ENCODE measurements at regions of chr12 and their contacts with region 1.

Region 1: DNA sequence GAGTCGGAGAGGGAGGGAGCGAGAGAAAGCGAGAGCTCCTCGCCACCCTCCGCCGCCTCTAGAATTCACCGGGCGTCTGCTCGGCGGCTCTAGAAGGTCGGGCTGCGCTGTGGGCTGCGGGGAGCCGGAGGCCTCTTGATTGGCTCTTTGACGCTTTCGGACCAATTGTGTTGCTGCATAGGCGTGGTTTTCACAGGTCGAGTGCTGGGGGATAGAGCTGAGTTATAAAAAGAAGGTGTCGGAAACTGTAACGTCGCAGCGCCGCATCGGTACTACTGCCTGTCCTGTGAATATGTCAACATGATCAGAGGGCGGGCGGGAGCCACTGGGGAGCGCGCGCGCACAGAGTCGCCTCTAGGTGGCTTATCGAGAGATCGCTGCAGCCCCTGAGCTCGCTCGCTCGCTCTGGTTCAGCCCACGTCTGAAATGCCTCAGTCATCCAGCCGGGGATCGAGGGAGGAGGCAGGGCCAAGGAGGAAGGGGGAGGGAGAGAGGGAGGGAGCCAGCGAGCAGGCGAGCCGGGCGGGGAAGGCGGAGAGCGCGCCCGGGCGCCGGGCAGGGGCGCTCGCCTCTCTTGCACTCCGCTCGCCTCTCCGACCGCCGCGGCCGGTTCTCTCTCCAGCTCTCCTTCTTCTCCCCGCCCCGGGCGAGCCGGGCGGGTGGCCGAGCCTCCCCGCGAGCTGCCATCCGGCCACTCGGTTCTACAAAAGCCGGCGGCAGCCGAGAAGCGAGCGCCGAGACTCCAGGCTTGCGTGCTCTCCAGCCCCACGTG is at the start of gene TBX3:
- DNase-seq: peak; percentile 19 to 82 (median 57)

Region 2: DNA sequence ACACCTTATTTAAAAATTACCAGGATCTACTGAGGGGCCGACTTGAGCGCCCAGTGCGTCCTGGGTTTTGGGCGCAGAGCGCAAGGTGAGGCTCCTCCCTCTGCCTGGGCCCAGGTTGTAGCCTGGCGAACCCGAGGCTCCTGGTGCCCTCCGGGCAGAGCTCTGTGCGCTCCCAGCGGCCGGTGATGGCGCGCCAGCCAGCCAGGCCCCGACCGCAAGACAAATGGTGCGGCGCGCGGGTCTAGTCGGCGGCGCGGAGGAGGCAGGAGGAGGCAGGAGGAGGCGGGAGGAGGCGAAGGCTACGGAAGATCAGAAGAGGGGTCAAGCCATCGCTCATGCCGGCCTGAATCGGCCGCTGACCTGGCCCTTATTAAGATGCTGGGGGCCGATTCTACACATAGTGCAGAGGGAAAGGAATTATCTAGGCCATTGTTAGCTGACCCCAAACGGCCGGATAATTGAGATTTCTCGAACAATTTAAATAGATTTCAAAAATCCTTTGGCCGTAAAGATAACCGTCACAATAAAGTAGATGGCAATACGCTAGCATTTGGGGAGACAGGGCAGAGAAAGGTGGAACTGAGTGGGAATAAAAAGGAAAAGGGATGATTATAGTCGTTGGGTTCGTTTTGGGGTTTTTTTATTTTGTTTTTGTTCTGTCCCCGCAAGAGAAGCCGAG is 281.1 kb before region 1 on chr12:
- intact Hi-C with region 1: loop called (anchors 10 kb)
- DNase-seq: peak in 2 of 42 donors; percentile 12 to 25

Region 3: GRCh38 chr12:114611145-114612018 is 72.9 kb before region 1 on chr12:
- intact Hi-C with region 1: no loop called
- DNase-seq: no peak